A549 (cell line): ENCODE measurements at regions of chr17 and their contacts with region 1.

Region 1: GRCh38 chr17:49407981-49408501 is 6.6 kb downstream of the PHB1 start:
- DNase-seq: peak; percentile 82 to 97
- ATAC-seq: peak; percentile 96 to 98
- H3K4me3 ChIP-seq: no peak overlapping the region
- H3K27ac ChIP-seq: no peak overlapping the region
- H3K4me1 ChIP-seq: peaks cover 8% of the 10 kb centered on the region; the same call in 2 of the 3 replicates
- CTCF ChIP-seq: peak; percentile 100
- EP300 ChIP-seq: no peak
- POLR2A ChIP-seq: no peak
- RAD21 ChIP-seq: peak; percentile 83 to 87

Region 2: DNA sequence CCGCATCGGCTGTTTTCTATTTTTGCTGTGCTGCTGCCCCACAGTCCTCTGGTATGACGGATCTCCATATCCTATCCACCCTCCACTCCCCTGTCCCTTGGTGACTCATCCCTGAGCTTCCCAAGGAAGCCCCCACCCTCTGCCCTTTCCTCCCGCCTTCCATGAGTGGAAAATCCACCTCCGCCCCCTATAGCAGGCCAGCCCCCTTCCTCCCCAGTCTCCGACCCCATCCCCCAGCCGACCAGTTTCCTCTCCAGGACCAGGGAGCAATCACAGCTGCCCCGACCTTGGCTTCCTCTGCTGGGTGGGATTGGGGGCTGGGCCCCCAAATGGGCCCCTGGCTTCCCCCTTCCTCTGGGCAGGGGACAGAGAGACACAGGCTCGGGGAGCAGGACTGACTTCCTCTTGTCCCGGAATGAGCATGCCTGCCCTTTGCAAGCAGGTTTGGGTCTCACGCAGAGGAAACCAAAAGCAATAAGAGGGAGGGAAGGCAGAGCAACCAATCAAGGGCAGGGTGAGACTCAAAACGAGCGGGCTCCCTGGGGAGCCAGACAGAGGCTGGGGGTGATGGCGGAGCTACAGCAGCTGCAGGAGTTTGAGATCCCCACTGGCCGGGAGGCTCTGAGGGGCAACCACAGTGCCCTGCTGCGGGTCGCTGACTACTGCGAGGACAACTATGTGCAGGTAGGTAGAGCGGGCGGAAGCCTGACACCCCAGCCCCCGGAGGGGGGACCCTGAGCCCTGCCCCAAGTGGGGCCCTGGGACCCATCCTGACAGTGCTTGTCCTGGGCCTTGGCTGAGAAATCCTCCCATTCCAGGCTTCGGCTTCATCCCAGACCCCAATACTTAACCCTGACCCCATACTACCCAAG is 197.6 kb before region 1 on chr17 and contains the starts of genes ABI3 and GNGT2:
- CTCF ChIA-PET with region 1: no interaction called
- POLR2A ChIA-PET with region 1: no interaction called
- DNase-seq: no peak
- ATAC-seq: no peak
- H3K4me3 ChIP-seq: no peak within 1 kb of the TSS
- H3K27ac ChIP-seq: no peak within 1 kb of the TSS
- H3K4me1 ChIP-seq: peaks cover 5% of the 10 kb centered on the region; the same call in 1 of the 3 replicates
- CTCF ChIP-seq: no peak
- EP300 ChIP-seq: no peak
- POLR2A ChIP-seq: no peak
- RAD21 ChIP-seq: no peak
- polyA plus RNA-seq, gene ABI3: not detected in 2 replicates
- polyA plus RNA-seq, gene GNGT2: not detected in 2 replicates

Region 3: GRCh38 chr17:49381063-49381462 is 27.0 kb before region 1 on chr17:
- CTCF ChIA-PET with region 1: interaction called, 15 read pairs
- POLR2A ChIA-PET with region 1: no interaction called
- DNase-seq: no peak
- ATAC-seq: no peak
- H3K4me3 ChIP-seq: no peak overlapping the region
- H3K27ac ChIP-seq: no peak overlapping the region
- H3K4me1 ChIP-seq: no peaks in the 10 kb centered on the region
- CTCF ChIP-seq: no peak
- EP300 ChIP-seq: no peak
- POLR2A ChIP-seq: no peak
- RAD21 ChIP-seq: no peak

Region 4: GRCh38 chr17:49425004-49425286 is 16.9 kb after region 1 on chr17:
- CTCF ChIA-PET with region 1: interaction called, 11 read pairs
- POLR2A ChIA-PET with region 1: no interaction called
- DNase-seq: no peak
- ATAC-seq: no peak
- H3K4me3 ChIP-seq: no peak overlapping the region
- H3K27ac ChIP-seq: no peak overlapping the region
- H3K4me1 ChIP-seq: no peaks in the 10 kb centered on the region
- CTCF ChIP-seq: no peak
- EP300 ChIP-seq: no peak
- POLR2A ChIP-seq: no peak
- RAD21 ChIP-seq: no peak

Region 5: DNA sequence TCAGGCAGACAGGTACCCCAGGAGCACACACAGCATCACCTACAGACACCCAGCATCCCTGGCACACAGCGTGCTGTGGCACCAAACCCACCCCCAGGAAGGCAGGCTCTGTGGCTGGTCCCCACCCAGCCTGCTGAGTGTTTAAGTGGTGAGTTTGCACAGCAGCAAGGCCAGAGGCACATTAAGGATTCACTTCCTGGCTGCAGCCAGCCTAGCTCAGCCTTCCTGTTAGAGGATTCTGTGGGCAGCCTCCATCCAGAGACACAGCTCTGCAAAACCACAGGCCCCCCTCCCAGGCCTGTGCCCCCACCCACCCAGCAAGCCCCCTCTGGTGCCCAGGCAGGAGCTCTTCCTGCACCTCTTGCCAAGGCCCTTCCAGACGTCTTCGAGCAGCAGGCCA is 42.7 kb after region 1 on chr17:
- CTCF ChIA-PET with region 1: interaction called, 11 read pairs
- POLR2A ChIA-PET with region 1: no interaction called
- DNase-seq: no peak
- ATAC-seq: peak in 1 of 2 experiments; percentile 23; a peak in 3 of 6 replicates
- H3K4me3 ChIP-seq: no peak overlapping the region
- H3K27ac ChIP-seq: no peak overlapping the region
- H3K4me1 ChIP-seq: peaks cover 4% of the 10 kb centered on the region; the same call in 2 of the 3 replicates
- CTCF ChIP-seq: no peak
- EP300 ChIP-seq: no peak
- POLR2A ChIP-seq: no peak
- RAD21 ChIP-seq: no peak

Region 6: GRCh38 chr17:49501504-49501903 is 93.5 kb after region 1 on chr17:
- CTCF ChIA-PET with region 1: interaction called, 30 read pairs
- POLR2A ChIA-PET with region 1: no interaction called
- DNase-seq: no peak
- ATAC-seq: no peak
- H3K4me3 ChIP-seq: no peak overlapping the region
- H3K27ac ChIP-seq: no peak overlapping the region
- H3K4me1 ChIP-seq: peaks cover 12% of the 10 kb centered on the region
- CTCF ChIP-seq: no peak
- EP300 ChIP-seq: no peak
- POLR2A ChIP-seq: no peak
- RAD21 ChIP-seq: no peak

Region 7: GRCh38 chr17:49515196-49515770 is 107.2 kb after region 1 on chr17:
- CTCF ChIA-PET with region 1: interaction called, 10 read pairs
- POLR2A ChIA-PET with region 1: no interaction called
- DNase-seq: peak; percentile 49 to 68
- ATAC-seq: peak; percentile 63 to 88
- H3K4me3 ChIP-seq: no peak overlapping the region
- H3K27ac ChIP-seq: peak overlapping the region; percentile 11 to 76; a peak in 3 of 6 replicates
- H3K4me1 ChIP-seq: 0 out of 3 replicates have a peak, but pooled peaks cover 6% of the 10 kb centered on the region
- CTCF ChIP-seq: no peak
- EP300 ChIP-seq: no peak
- POLR2A ChIP-seq: no peak
- RAD21 ChIP-seq: no peak

Region 8: DNA sequence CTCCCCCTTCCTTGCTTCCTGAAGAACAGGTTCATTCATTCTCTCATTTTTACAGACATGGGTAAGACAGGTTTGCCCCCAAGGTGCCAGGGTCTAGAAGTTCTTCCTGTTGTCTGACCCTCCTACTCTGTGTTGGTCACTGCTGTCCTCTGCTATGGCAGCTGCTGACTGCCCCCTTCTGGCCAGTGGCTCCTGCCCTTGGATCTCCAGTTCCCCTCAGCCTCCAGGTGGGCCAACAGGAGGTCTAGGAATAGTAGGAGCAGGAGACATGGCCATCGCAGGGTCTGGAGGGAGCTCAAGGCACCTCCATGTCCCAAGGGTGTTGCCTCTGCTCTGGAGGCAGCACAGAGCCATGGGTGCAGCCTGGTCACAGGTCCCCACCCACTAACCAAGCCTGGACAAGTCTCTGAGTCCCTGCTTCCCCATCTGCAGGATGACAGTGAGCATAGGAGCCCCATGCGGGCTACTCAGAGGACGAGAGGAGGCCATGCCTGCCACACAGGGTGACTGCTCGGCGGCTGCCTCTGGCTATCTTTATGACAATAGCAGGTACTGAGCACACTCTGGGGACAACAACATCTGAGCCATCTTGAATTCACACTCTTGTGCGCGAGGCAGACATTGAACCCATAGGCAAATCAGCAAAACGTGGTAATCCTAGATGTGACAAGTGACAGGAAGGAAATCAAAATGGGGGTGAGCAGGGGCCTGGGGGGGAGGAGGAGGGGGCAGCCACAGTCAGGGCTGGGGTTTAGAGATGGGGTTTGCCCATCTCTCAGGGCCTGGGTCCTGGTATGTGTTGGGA is 140.7 kb after region 1 on chr17:
- CTCF ChIA-PET with region 1: interaction called, 40 read pairs
- POLR2A ChIA-PET with region 1: no interaction called
- DNase-seq: peak; percentile 64 to 66
- ATAC-seq: peak; percentile 31 to 91; a peak in 3 of 6 replicates
- H3K4me3 ChIP-seq: no peak overlapping the region
- H3K27ac ChIP-seq: no peak overlapping the region
- H3K4me1 ChIP-seq: no peaks in the 10 kb centered on the region
- CTCF ChIP-seq: peak; percentile 60
- EP300 ChIP-seq: no peak
- POLR2A ChIP-seq: no peak
- RAD21 ChIP-seq: peak; percentile 71 to 86